AG04449 (cell line): ENCODE measurements at regions of chr1 and their contacts with region 1.

Region 1: GRCh38 chr1:193121616-193122593 is at the start of gene CDC73:
- DNase-seq: peak; percentile 82
- H3K4me3 ChIP-seq: peak within 1 kb of the TSS; percentile 89
- CTCF ChIP-seq: peak; percentile 98

Region 2: DNA sequence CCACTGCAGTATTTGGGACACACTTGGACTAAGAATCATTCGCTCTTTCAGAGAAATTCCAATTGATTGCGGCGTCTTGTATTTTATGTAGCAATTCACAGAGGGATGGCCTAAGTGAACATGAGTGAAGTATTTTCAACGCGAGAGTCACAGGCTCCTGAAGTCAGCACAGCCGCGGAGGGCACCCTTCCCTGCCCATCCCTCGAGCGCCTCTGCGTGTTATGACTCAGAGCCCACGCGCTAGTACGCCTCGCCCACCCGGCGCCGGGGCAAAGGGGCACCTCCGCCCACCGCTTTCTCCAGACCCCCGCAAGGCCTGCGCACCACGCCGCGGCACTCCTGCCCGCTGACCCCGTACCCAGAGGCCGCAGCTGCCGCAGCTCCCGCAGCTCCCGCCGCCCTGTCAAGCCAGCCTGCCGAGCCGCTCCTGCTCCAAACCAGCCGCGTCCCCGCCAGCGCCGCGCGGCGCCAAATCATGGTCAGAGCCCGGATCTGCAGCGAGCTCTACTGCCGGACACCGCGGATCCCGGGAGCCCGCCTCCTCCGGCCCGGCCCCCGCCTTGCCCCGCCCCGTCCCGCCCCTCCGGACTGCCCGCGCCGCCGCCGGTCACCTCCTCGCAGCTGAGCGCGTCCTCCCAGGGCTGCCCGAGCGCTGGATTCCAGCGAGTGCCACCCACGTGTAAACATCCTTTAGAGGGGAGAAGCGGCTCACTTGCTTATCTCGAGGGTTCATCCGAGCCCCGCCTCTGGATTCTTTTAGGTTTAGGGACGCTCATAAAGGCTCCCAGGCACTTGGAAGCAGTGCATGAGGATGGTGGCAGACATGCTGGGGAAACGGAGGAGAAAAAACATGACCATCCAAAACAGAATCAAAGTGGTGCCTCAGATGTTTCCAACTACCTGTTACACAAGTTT is 16.7 kb before region 1 on chr1 and contains the start of gene GLRX2:
- CTCF ChIA-PET with region 1: interaction called, 78 read pairs
- POLR2A ChIA-PET with region 1: interaction called, 24 read pairs
- DNase-seq: no peak
- H3K4me3 ChIP-seq: peak within 1 kb of the TSS; percentile 75
- CTCF ChIP-seq: peak; percentile 0

Region 3: DNA sequence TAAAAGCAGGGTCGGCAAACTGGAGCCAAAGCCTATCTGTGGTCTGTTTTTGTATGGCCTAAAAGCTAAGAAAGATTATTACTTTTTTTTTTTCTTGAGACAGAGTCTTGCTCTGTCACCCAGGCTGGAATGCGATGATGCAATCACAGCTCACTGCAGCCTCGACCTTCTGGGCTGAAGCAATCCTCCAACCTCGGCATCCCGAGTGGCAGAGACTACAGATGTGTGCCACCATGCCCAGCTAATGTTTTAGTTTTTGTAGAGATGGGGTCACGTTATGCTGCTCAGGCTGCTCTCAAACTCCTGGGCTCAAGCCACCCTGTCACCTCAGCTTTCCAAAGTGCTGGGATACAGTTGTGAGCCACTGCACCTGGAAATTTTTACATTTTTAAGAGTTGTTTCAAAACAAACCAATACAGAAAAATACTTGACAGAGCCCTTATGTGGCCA is 10.2 kb before region 1 on chr1:
- CTCF ChIA-PET with region 1: interaction called, 78 read pairs
- POLR2A ChIA-PET with region 1: interaction called, 7 read pairs
- DNase-seq: no peak
- H3K4me3 ChIP-seq: no peak overlapping the region
- CTCF ChIP-seq: no peak

Region 4: GRCh38 chr1:193143285-193143684 is 21.4 kb after region 1 on chr1:
- CTCF ChIA-PET with region 1: interaction called, 12 read pairs
- POLR2A ChIA-PET with region 1: no interaction called
- DNase-seq: no peak
- H3K4me3 ChIP-seq: no peak overlapping the region
- CTCF ChIP-seq: peak; percentile 9

Region 5: GRCh38 chr1:193211539-193211938 is 89.6 kb after region 1 on chr1:
- CTCF ChIA-PET with region 1: no interaction called
- POLR2A ChIA-PET with region 1: no interaction called
- DNase-seq: peak; percentile 73
- H3K4me3 ChIP-seq: no peak overlapping the region
- CTCF ChIP-seq: no peak

Region 6: DNA sequence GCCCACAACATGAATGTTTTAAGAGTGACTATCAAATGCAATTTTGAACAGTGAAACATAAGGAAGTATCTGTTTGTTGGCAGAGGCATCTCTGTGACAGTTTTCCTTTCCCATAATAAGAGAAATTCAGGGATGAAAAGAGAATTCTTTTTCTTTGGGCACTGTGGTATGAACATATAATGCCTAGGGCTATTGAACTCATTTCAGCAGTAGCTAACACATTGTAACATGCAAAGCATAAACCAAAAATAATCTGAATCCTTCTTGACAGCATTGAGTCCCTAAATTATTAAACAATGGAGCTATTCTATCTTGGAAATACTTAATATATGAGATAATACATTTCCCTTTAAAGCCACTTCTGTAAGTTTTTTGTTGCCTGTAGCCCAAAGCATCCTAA is 697.5 kb after region 1 on chr1:
- CTCF ChIA-PET with region 1: no interaction called
- POLR2A ChIA-PET with region 1: no interaction called
- DNase-seq: no peak
- H3K4me3 ChIP-seq: no peak overlapping the region
- CTCF ChIP-seq: no peak